Gastrocnemius medialis (tissue), 4 donors: ENCODE measurements at regions of chr11 and their contacts with region 1.

Region 1: DNA sequence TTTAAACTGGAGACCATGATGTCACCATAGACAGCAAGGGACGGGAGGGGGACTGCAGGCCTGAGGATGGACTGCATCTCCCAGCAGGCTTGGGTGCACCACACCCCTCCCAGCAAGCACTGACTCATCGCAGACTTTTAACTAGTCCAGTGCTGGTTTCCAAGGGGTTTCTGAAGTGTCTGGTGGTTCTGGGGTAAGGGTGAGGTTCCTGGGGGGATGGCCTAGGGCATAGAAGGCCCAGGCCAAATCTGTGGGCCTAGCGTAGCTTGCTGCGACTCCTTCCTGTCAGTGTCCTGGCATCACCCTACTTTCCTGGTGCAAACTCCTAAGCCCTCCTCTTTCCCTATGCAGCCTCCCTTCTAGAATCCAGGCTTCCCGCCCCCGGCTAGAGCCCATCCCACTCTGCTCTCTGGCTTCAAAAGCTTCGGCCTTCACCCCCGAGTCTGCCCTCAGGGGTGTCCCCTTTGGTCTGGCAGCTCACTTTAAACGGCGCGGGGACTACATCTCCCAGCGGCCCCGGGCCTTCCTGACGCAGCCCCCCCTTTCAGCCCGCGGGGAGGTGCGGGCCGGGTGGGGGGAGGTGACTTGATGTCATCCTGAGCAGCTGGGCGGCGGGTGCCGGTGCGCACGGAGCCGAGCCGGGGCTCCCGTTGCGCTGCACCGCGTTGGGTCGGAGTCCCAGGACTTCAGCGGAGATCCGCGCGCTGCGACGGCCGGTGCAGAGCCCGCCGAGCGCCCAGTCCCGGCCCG is at the start of gene PPP2R5B:
- DNase-seq: peak; percentile 95
- ATAC-seq: peak; percentile 97 to 98
- H3K4me3 ChIP-seq: peak within 1 kb of the TSS; percentile 80 to 100 (median 86)
- H3K27ac ChIP-seq: peak within 1 kb of the TSS; percentile 97 to 100 (median 100)
- H3K4me1 ChIP-seq: peaks cover 21 to 24% of the 10 kb centered on the region in 2 donors
- H3K27me3 ChIP-seq: no peaks in the 10 kb centered on the region
- CTCF ChIP-seq: peak in 1 of 5 experiments; percentile 49
- POLR2A ChIP-seq: peak; percentile 87 to 94
- total RNA-seq, gene PPP2R5B: 17.2 to 34.2 (median 24.3) TPM

Region 2: GRCh38 chr11:64854534-64855429 is 69.5 kb before region 1 on chr11:
- in situ Hi-C with region 1: no loop called
- intact Hi-C with region 1: loop called (anchors 2 kb)
- DNase-seq: peak; percentile 72 to 94
- ATAC-seq: peak; percentile 49 to 53
- H3K4me3 ChIP-seq: peak overlapping the region in 2 of 4 donors; percentile 7 to 19
- H3K27ac ChIP-seq: peak overlapping the region; percentile 90 to 94 (median 92)
- H3K4me1 ChIP-seq: peaks cover 86 to 96% of the 10 kb centered on the region in 2 donors
- H3K27me3 ChIP-seq: no peaks in the 10 kb centered on the region
- CTCF ChIP-seq: no peak
- POLR2A ChIP-seq: peak in 1 of 2 donors; percentile 14